IMR-90 (cell line): ENCODE measurements at regions of chr6 and their contacts with region 1.

Region 1: GRCh38 chr6:131615275-131615674 is 12.8 kb downstream of the MED23 start:
- DNase-seq: no peak
- ATAC-seq: no peak
- H3K4me3 ChIP-seq: no peak overlapping the region
- H3K27ac ChIP-seq: no peak overlapping the region
- H3K4me1 ChIP-seq: no peaks in the 10 kb centered on the region
- H3K27me3 ChIP-seq: no peaks in the 10 kb centered on the region
- CTCF ChIP-seq: no peak
- POLR2A ChIP-seq: no peak
- RAD21 ChIP-seq: no peak

Region 2: GRCh38 chr6:131581523-131581922 is 33.8 kb before region 1 on chr6:
- CTCF ChIA-PET with region 1: no interaction called
- POLR2A ChIA-PET with region 1: no interaction called
- dilution Hi-C with region 1: no loop called
- in situ Hi-C with region 1: no loop called
- intact Hi-C with region 1: loop called (anchors 2 kb)
- DNase-seq: no peak
- ATAC-seq: no peak
- H3K4me3 ChIP-seq: no peak overlapping the region
- H3K27ac ChIP-seq: no peak overlapping the region
- H3K4me1 ChIP-seq: no peaks in the 10 kb centered on the region
- H3K27me3 ChIP-seq: no peaks in the 10 kb centered on the region
- CTCF ChIP-seq: no peak
- POLR2A ChIP-seq: no peak
- RAD21 ChIP-seq: no peak

Region 3: GRCh38 chr6:131602781-131603312 is 12.4 kb before region 1 on chr6:
- CTCF ChIA-PET with region 1: interaction called, 3 read pairs
- POLR2A ChIA-PET with region 1: no interaction called
- dilution Hi-C with region 1: no loop called
- in situ Hi-C with region 1: no loop called
- intact Hi-C with region 1: loop called (anchors 2 kb)
- DNase-seq: peak; percentile 97
- ATAC-seq: peak; percentile 98
- H3K4me3 ChIP-seq: no peak overlapping the region
- H3K27ac ChIP-seq: no peak overlapping the region
- H3K4me1 ChIP-seq: peaks cover 2% of the 10 kb centered on the region; the same call in 1 of the 2 replicates
- H3K27me3 ChIP-seq: no peaks in the 10 kb centered on the region
- CTCF ChIP-seq: no peak
- POLR2A ChIP-seq: no peak
- RAD21 ChIP-seq: no peak

Region 4: GRCh38 chr6:131627724-131628682 is 12.7 kb after region 1 on chr6 and contains the start of gene MED23:
- CTCF ChIA-PET with region 1: interaction called, 23 read pairs
- POLR2A ChIA-PET with region 1: no interaction called
- dilution Hi-C with region 1: no loop called
- in situ Hi-C with region 1: no loop called
- intact Hi-C with region 1: no loop called
- DNase-seq: peak; percentile 92
- ATAC-seq: peak; percentile 99
- H3K4me3 ChIP-seq: peak within 1 kb of the TSS; percentile 82
- H3K27ac ChIP-seq: peak within 1 kb of the TSS; percentile 62
- H3K4me1 ChIP-seq: no peaks in the 10 kb centered on the region
- H3K27me3 ChIP-seq: peaks cover 2% of the 10 kb centered on the region; the same call in 1 of the 2 replicates
- CTCF ChIP-seq: peak; percentile 100; the same call in 1 of the 2 replicates
- POLR2A ChIP-seq: peak; percentile 70; the same call in 1 of the 2 replicates
- RAD21 ChIP-seq: peak; percentile 74
- total RNA-seq, gene MED23: 38.3 and 40.7 TPM in 2 replicates

Region 5: DNA sequence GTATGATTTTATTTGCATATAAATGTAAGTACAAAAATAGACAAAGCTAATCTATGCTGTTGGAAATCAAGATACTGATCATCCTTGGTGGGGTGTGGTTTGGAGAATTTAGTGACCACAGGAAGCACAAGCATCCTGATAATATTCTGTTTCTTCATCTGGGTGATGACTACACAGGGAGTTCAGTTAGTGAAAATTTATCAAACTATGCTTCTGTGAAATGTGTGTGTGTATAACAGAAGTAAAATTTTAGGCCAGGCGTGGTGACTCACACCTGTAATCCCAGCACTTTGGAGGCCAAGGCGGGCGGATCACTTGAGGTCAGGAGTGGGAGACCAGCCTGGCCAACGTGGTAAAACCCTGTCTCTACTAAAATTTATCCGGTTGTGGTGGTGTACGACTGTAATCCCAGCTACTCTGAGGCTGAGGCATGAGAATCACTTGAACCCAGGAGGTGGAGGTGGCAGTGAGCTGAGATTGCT is 42.4 kb after region 1 on chr6:
- CTCF ChIA-PET with region 1: no interaction called
- POLR2A ChIA-PET with region 1: no interaction called
- dilution Hi-C with region 1: no loop called
- in situ Hi-C with region 1: no loop called
- intact Hi-C with region 1: no loop called
- DNase-seq: peak; percentile 85
- ATAC-seq: peak; percentile 78
- H3K4me3 ChIP-seq: no peak overlapping the region
- H3K27ac ChIP-seq: no peak overlapping the region; the same call in 1 of the 2 replicates
- H3K4me1 ChIP-seq: peaks cover 5% of the 10 kb centered on the region
- H3K27me3 ChIP-seq: no peaks in the 10 kb centered on the region
- CTCF ChIP-seq: no peak
- POLR2A ChIP-seq: no peak
- RAD21 ChIP-seq: no peak